HAP-1 (cell line): ENCODE measurements at regions of chr3 and their contacts with region 1.

Region 1: DNA sequence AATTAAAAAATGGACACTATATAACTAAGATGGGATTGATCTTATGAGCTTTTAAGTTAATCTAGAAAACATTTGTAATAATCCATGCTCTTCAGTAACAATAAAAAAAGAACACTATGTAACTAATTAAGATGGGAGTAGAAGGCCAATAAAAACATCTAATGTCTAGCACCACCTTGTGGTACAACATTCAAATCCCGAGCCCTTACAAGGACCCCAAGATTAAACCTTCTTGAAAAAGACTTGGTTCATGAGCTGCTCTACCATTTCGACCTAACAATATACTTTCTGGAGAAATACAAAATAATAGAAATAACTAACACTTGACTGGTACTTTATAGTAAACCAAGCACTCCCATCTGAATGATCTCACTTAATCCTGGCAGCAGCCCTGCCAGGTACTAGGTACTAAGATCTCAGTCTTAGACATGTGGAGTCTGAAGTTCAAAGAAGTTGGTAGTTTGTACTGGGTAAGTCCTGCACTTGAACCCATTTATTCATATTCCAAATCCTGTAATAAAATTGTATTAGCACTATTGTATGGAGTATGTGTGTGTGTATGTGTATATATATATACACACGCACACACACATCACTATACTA is 21.8 kb downstream of the METTL6 start:
- DNase-seq: peak; percentile 18 to 55
- H3K4me3 ChIP-seq: no peak overlapping the region
- H3K4me1 ChIP-seq: no peaks in the 10 kb centered on the region
- H3K27me3 ChIP-seq: no peaks in the 10 kb centered on the region

Region 2: GRCh38 chr3:15113463-15113862 is 292.1 kb before region 1 on chr3:
- in situ Hi-C with region 1: loop called (anchors 10 kb)
- DNase-seq: no peak
- H3K4me3 ChIP-seq: no peak overlapping the region
- H3K4me1 ChIP-seq: no peaks in the 10 kb centered on the region
- H3K27me3 ChIP-seq: 0 out of 2 replicates have a peak, but pooled peaks cover 2% of the 10 kb centered on the region

Region 3: GRCh38 chr3:15215996-15216395 is 189.6 kb before region 1 on chr3:
- in situ Hi-C with region 1: no loop called
- DNase-seq: no peak
- H3K4me3 ChIP-seq: no peak overlapping the region
- H3K4me1 ChIP-seq: no peaks in the 10 kb centered on the region
- H3K27me3 ChIP-seq: no peaks in the 10 kb centered on the region

Region 4: DNA sequence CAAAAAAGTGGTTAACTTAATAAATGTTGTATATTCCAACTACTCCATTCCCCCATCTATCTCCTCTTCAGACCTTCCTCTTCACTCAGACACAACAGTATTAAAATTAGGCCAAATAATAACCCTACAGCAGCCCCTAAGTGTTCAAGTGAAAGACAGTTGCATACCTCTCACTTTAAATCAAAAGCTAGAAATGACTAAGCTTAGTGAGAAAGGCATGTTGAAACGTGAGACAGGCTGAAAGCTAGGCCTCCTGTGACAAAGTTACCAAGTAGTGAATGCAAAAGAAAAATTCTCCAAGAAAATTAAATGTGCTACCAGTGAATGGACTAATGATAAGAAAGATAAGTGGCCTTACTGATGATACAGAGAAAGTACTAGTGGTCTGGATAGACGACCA is 320.5 kb after region 1 on chr3:
- in situ Hi-C with region 1: no loop called
- DNase-seq: no peak
- H3K4me3 ChIP-seq: no peak overlapping the region
- H3K4me1 ChIP-seq: no peaks in the 10 kb centered on the region
- H3K27me3 ChIP-seq: no peaks in the 10 kb centered on the region